ENCODE measurements at regions of chr9 and their contacts with region 1.

Region 1: GRCh38 chr9:130682490-130683121 is 11.0 kb upstream of the EXOSC2 start:
- DNase-seq: peak; percentile 71
- CTCF ChIP-seq: peak; percentile 85

Region 2: DNA sequence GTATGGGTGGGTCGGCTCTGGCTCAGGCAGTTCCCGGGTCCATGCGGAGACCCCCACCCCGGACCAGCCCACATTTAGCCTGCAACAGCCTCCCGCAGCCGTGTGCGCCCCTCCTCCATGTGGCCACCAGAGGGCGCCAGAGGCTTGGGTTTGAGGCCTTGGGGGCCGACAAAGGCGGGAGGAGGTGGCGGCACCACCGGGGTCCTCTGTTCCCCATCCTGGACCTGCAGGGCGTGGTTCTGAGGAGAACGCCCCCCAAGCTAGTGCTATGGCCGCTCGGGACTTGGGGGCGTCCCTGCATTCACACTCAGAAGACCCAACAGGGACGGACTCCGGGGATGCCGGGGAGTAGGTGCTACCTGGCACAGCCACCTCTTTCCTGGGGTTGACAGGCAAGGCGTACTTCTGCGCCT is 221.4 kb before region 1 on chr9:
- CTCF ChIA-PET with region 1: interaction called, 262 read pairs
- POLR2A ChIA-PET with region 1: no interaction called
- DNase-seq: peak; percentile 85
- CTCF ChIP-seq: peak; percentile 97

Region 3: DNA sequence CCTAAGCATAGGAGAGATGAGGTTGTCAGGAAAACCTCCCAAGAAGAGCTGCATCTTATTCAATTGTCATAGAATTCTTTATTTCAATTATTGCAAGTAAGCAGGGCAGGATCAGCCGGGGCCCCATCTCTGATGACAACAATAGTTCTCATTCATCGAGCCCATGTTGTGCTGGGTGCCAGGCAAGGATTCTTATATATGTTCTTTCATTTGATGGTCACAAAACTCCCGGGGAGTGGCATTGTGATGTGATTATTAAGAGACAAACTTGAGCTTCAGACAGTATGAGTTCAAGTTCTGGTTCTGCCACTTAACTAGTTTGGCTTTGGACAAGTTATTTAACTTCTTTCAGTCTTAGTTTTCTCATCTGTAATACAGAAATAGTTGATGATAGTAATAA is 94.7 kb before region 1 on chr9:
- CTCF ChIA-PET with region 1: no interaction called
- POLR2A ChIA-PET with region 1: no interaction called
- DNase-seq: no peak
- CTCF ChIP-seq: no peak

Region 4: DNA sequence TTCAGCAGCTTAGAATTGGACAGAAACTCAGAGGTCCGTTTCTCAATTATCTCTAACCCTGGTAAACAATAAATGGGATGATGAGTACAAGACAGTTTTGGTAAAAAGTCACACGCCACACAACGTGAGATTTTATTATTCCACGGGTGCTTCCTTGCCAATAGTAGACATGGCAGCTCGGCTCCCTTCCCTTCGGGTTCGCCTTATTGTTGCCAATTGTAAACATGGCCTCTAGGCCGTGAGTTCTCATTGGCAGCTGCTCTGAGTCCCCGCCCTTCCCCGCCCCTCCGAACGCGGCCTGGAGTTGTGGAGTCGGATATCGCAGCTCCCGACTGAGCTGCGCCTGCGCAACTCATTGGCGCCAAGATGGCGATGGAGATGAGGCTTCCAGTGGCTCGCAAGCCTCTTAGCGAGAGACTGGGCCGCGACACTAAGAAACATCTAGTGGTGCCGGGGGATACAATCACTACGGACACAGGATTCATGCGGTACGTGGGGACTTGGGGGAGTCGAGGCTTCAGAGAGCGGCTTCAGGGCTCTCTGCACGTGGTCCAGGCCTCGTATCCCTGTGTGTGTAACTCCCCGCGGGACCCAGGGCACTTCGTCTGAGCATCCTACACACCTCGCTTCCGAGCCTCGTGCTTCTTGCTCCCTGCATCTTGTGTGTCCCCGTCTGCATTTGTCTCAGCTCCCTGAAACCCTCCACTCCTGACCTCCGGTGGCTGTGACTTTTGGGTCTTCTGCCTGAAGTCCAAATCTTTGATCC is 11.0 kb after region 1 on chr9 and contains the start of gene EXOSC2:
- CTCF ChIA-PET with region 1: interaction called, 53 read pairs
- POLR2A ChIA-PET with region 1: interaction called, 3 read pairs
- DNase-seq: peak; percentile 99
- CTCF ChIP-seq: no peak

Region 5: DNA sequence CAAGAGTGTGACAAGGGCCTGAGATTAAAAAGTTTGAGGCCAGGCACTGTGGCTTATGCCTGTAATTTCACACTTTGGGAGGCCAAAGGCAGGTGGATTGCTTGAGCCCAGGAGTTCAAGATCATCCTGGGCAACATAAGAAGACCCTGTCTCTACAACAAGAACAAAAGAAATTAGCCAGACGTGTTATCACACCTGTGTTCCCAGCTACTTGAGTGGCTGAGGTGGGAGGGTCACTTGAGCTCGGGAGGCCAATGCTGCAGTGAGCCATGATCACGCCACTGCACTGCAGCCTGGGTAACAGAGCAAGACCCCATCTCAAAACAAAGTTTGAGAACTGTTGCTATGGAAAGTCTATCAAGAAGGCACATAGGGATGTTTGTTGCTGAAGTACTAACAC is 36.0 kb after region 1 on chr9:
- CTCF ChIA-PET with region 1: no interaction called
- POLR2A ChIA-PET with region 1: no interaction called
- DNase-seq: no peak
- CTCF ChIP-seq: no peak

Measured in GM10248 (cell line).